AG04449 (cell line): ENCODE measurements at regions of chr1 and their contacts with region 1.

Region 1: GRCh38 chr1:9874959-9875635 is 35.0 kb downstream of the CTNNBIP1 start:
- DNase-seq: no peak
- H3K4me3 ChIP-seq: no peak overlapping the region
- CTCF ChIP-seq: peak; percentile 80

Region 2: DNA sequence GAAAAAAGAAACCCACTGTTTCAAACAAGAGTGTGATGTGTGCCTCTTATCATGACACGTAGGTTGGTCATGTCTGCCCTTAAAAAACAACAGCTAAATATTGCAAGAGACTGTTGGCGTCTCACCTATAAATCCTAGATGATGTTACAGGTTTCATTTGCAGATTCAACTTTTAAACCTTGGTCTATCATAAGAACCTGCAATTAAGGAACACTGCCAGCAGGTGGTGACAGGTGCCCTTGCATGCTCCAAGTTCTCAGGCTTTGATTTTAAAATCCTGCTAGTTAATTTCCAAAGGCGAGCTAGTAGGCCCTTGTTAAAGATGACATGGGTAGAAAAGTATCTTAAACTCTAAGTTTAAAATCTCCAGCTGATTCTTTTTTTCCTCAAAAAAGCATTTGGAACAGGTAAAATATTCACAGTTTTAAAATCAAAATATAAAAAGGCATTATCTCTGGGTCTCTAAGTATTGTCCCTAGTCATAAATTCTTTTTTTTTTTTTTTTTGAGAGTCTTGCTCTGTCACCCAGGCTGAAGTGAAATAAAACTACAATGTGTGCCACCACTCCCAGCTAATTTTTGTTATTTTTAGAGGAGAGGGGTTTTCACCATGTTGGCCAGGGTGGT is 90.5 kb before region 1 on chr1:
- CTCF ChIA-PET with region 1: interaction called, 18 read pairs
- POLR2A ChIA-PET with region 1: no interaction called
- DNase-seq: no peak
- H3K4me3 ChIP-seq: no peak overlapping the region
- CTCF ChIP-seq: peak; percentile 56

Region 3: DNA sequence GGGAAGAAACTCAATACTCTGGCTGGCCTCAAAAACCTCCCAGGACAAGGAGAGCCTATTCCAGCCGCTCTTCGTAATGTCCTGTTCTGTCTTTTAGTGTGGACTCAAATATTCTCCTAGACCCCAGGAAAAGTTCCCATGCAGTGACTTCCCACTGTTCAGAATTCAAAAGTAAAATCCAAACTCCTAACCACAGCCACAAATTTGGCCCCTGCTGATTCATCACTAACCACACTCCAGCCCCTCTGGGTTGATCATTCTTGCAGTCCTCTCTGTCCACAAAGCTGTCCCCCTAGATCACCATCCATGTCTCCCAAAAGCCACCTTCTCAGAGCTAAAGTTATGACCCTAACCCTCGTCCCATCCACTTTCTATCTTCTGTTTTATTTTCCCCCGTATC is 29.9 kb after region 1 on chr1:
- CTCF ChIA-PET with region 1: interaction called, 14 read pairs
- POLR2A ChIA-PET with region 1: no interaction called
- DNase-seq: no peak
- H3K4me3 ChIP-seq: no peak overlapping the region
- CTCF ChIP-seq: no peak

Region 4: GRCh38 chr1:9914610-9914937 is 39.5 kb after region 1 on chr1:
- CTCF ChIA-PET with region 1: interaction called, 63 read pairs
- POLR2A ChIA-PET with region 1: no interaction called
- DNase-seq: no peak
- H3K4me3 ChIP-seq: no peak overlapping the region
- CTCF ChIP-seq: no peak

Region 5: DNA sequence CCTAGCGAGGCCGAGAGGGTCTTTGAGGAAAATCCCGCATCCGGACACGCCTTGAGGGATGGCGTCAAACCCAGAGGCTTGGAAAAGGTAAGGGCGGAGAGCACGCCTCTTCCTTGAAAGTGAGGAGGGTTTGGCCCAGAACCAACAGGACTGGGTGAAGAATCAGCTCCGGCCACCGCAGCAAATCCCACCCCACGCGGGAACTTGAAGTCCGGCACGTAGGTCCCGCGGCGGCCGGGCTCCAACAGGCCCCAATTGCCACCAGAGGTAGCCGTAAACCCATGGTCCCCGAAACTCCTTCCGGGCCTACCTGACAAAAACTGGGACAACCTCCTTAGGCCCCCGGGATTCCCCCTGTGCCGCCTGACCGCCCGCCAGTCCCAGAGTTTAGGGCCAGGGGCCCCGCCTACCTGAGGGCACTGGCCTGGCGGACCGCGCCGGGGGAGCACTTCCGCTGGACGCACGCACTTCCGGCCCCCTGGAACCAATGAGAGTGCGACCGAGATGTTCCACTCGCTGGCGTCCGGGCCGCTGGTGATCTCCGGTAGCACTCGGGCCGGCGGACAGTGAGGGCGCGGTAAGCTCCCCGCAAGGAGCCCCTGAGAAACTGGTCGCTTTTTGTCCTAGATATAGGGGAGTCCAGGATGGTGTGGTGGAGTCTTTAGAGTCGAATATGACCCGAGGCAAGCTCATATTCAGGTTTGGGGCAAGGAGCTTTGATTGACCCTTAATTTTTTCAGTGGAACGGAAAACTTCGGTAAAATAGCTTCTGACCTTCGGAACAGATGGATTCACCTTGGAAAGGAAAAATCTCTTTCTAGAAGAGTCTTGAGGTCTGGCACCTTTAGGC is 68.1 kb after region 1 on chr1 and contains the starts of genes LZIC and NMNAT1:
- CTCF ChIA-PET with region 1: interaction called, 187 read pairs
- POLR2A ChIA-PET with region 1: interaction called, 6 read pairs
- DNase-seq: peak; percentile 57
- H3K4me3 ChIP-seq: peak within 1 kb of the TSS; percentile 92
- CTCF ChIP-seq: no peak

Region 6: GRCh38 chr1:10101929-10102328 is 226.8 kb after region 1 on chr1:
- CTCF ChIA-PET with region 1: no interaction called
- POLR2A ChIA-PET with region 1: no interaction called
- DNase-seq: no peak
- H3K4me3 ChIP-seq: no peak overlapping the region
- CTCF ChIP-seq: no peak